ENCODE measurements at regions of chr5 and their contacts with region 1.

Region 1: GRCh38 chr5:93311881-93312280 is 269.1 kb downstream of the NR2F1-AS1 start:
- DNase-seq: no peak
- H3K4me3 ChIP-seq: no peak overlapping the region
- H3K27ac ChIP-seq: no peak overlapping the region
- H3K4me1 ChIP-seq: no peaks in the 10 kb centered on the region
- H3K27me3 ChIP-seq: no peaks in the 10 kb centered on the region
- CTCF ChIP-seq: no peak
- EP300 ChIP-seq: no peak
- POLR2A ChIP-seq: no peak

Region 2: GRCh38 chr5:94268226-94268625 is 956.3 kb after region 1 on chr5:
- in situ Hi-C with region 1: no loop called
- intact Hi-C with region 1: loop called (anchors 10 kb)
- DNase-seq: no peak
- H3K4me3 ChIP-seq: no peak overlapping the region
- H3K27ac ChIP-seq: no peak overlapping the region
- H3K4me1 ChIP-seq: no peaks in the 10 kb centered on the region
- H3K27me3 ChIP-seq: no peaks in the 10 kb centered on the region
- CTCF ChIP-seq: no peak
- EP300 ChIP-seq: no peak
- POLR2A ChIP-seq: no peak